Mammary epithelial cell (primary cell): ENCODE measurements at regions of chr5 and their contacts with region 1.

Region 1: DNA sequence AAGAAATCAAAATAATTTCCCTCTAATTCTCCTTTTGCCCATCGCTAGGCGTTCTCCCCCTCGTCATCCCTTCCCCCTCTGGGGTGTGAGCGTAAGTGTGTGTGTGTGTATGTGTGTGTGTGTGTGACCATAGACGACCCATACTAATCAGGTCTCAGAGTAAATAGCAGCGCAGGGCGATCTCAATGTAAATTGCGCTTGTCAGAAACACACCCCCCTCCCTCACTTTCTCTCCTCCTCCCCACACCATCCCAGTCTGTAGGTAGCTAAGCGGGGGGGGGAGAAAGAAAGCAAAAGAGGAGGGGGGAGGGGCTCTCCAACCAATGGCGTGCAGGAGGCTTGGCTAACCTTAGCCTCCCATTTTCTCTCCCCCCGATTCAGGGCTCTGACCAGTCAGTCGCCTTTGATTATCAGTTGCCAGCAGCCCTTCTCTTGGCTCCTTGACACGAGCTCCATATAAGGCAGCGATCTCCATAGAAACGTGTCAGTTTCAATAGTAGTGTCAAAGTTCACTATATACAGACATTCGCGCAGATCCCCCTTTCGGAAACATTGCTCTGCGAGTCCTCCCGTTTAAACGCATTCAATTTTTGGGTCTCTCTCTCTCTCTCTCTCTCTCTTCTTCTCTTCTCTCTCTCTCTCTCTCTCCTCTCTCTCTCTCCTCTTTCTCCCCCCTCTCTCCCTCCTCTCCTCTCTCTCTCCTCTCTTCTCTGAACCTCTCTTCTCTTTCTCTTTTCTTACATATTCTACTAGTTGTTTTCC is at the start of gene NR2F1:
- DNase-seq: peak; percentile 92
- H3K4me3 ChIP-seq: peak within 1 kb of the TSS; percentile 62 to 76 (median 67)
- H3K27ac ChIP-seq: peak within 1 kb of the TSS; percentile 38
- H3K4me1 ChIP-seq: peaks cover 18% of the 10 kb centered on the region
- H3K27me3 ChIP-seq: no peaks in the 10 kb centered on the region
- CTCF ChIP-seq: no peak
- total RNA-seq, gene NR2F1: 3.3 to 3.5 TPM

Region 2: GRCh38 chr5:92909602-92909962 is 673.3 kb before region 1 on chr5:
- CTCF ChIA-PET with region 1: no interaction called
- dilution Hi-C with region 1: no loop called
- in situ Hi-C with region 1: loop called in 1 of 2 experiments (anchors 25 kb)
- intact Hi-C with region 1: no loop called
- DNase-seq: no peak
- H3K4me3 ChIP-seq: no peak overlapping the region
- H3K27ac ChIP-seq: no peak overlapping the region
- H3K4me1 ChIP-seq: no peaks in the 10 kb centered on the region
- H3K27me3 ChIP-seq: no peaks in the 10 kb centered on the region
- CTCF ChIP-seq: peak; percentile 34 to 43

Region 3: GRCh38 chr5:93164690-93165089 is 418.2 kb before region 1 on chr5:
- CTCF ChIA-PET with region 1: no interaction called
- dilution Hi-C with region 1: no loop called
- in situ Hi-C with region 1: no loop called
- intact Hi-C with region 1: loop called (anchors 2 kb)
- DNase-seq: peak; percentile 59
- H3K4me3 ChIP-seq: no peak overlapping the region
- H3K27ac ChIP-seq: no peak overlapping the region
- H3K4me1 ChIP-seq: peaks cover 42% of the 10 kb centered on the region
- H3K27me3 ChIP-seq: no peaks in the 10 kb centered on the region
- CTCF ChIP-seq: no peak

Region 4: DNA sequence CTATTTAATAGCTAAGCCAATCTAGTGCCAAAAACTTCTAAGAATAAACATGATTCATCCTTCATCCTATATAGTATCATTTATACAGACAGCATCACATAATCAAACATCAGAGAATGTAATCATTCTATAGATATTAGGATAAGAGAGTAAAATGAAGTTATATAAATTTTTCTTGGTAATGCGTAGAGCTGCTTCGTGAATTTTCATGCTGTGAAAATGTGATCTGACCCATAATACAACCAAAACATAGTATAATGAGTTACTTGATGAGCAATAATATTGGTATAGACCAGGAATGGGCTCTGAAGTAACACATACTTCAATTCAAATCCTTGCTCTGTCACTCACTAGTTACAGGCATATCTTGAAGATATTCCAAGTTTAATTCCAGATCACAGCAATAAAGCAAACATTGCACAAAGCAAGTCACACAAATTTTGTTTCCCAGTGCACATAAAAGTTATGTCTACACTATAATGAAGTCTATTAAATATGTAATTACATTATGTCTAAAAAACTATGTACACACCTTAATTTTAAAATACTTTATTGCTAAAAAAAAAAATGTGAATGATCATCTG is 25.7 kb before region 1 on chr5:
- CTCF ChIA-PET with region 1: interaction called, 24 read pairs
- dilution Hi-C with region 1: no loop called
- in situ Hi-C with region 1: no loop called
- intact Hi-C with region 1: no loop called
- DNase-seq: no peak
- H3K4me3 ChIP-seq: no peak overlapping the region
- H3K27ac ChIP-seq: no peak overlapping the region
- H3K4me1 ChIP-seq: no peaks in the 10 kb centered on the region
- H3K27me3 ChIP-seq: no peaks in the 10 kb centered on the region
- CTCF ChIP-seq: no peak

Region 5: GRCh38 chr5:93894601-93895354 is 311.9 kb after region 1 on chr5:
- CTCF ChIA-PET with region 1: no interaction called
- dilution Hi-C with region 1: no loop called
- in situ Hi-C with region 1: no loop called
- intact Hi-C with region 1: loop called (anchors 1 kb)
- DNase-seq: no peak
- H3K4me3 ChIP-seq: no peak overlapping the region
- H3K27ac ChIP-seq: no peak overlapping the region
- H3K4me1 ChIP-seq: no peaks in the 10 kb centered on the region
- H3K27me3 ChIP-seq: no peaks in the 10 kb centered on the region
- CTCF ChIP-seq: peak; percentile 66